ENCODE measurements at regions of chr12 and their contacts with region 1.

Region 1: GRCh38 chr12:1939801-1940607 is 21.6 kb upstream of the CACNA2D4 start:
- DNase-seq: peak; percentile 91 to 94
- H3K4me3 ChIP-seq: no peak overlapping the region
- H3K27ac ChIP-seq: peak overlapping the region in 2 of 5 donors; percentile 46 to 86
- H3K4me1 ChIP-seq: peaks cover 28 to 48% (median 40%) of the 10 kb centered on the region in 4 donors
- H3K27me3 ChIP-seq: no peaks in the 10 kb centered on the region
- CTCF ChIP-seq: peak in 6 of 7 experiments; percentile 73 to 98 (median 96)
- EP300 ChIP-seq: no peak
- POLR2A ChIP-seq: no peak

Region 2: GRCh38 chr12:1634590-1635191 is 305.3 kb before region 1 on chr12:
- intact Hi-C with region 1: loop called (anchors 10 kb)
- DNase-seq: peak; percentile 86 to 92
- H3K4me3 ChIP-seq: no peak overlapping the region
- H3K27ac ChIP-seq: no peak overlapping the region
- H3K4me1 ChIP-seq: peaks cover 11 to 37% (median 27%) of the 10 kb centered on the region in 4 donors
- H3K27me3 ChIP-seq: peaks cover 0 to 33% (median 15%) of the 10 kb centered on the region in 3 donors
- CTCF ChIP-seq: peak in 5 of 7 experiments; percentile 44 to 73 (median 70)
- EP300 ChIP-seq: no peak
- POLR2A ChIP-seq: no peak